PC-9 (cell line): ENCODE measurements at regions of chr2 and their contacts with region 1.

Region 1: DNA sequence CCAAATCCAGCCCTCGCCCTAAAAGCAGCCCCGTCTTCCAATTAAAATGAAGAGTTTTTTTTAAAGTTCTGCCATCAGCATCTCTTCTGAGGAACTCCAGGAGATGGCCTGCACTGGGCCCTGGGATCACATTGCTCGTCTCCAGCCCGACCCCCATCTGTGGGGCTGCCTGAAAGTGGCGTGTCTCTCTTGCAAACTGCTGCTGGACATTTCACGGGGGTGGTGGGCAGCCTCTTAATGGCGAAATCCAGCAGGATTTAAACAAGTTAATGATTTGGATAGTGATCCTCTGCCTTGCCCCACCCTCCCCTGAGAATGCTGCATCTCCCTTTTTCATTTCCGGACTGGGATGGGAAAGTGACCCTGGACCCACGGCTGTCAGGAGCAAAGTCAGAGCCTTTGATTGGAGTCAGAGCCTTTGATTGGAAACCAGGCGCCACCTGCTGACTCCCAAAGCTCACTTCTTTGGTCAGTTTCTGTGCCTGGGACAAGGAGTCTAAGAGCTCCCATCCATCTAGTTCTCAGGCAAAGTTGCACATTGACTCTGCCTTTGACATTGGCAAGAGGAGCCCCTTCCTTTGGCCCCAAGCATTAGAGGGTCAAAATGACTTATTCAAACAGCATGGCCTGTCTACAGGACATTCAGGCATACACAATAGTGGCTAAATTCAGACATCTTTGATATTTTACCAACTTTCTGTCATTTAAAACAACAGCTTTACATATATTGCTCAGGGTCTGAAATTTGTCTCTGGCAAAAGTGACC is 155.2 kb downstream of the SH3BP4 start:
- DNase-seq: peak; percentile 72 to 78
- H3K4me3 ChIP-seq: no peak overlapping the region
- H3K27ac ChIP-seq: no peak overlapping the region
- H3K4me1 ChIP-seq: peaks cover 9% of the 10 kb centered on the region; the same call in 1 of the 2 replicates
- H3K27me3 ChIP-seq: no peaks in the 10 kb centered on the region
- CTCF ChIP-seq: peak; percentile 91

Region 2: GRCh38 chr2:233854241-233854981 is 1252.6 kb before region 1 on chr2 and contains the start of gene HJURP:
- CTCF ChIA-PET with region 1: no interaction called
- POLR2A ChIA-PET with region 1: no interaction called
- intact Hi-C with region 1: loop called (anchors 5 kb)
- DNase-seq: peak; percentile 95 to 98
- H3K4me3 ChIP-seq: peak within 1 kb of the TSS; percentile 100
- H3K27ac ChIP-seq: peak within 1 kb of the TSS; percentile 21; the same call in 1 of the 2 replicates
- H3K4me1 ChIP-seq: peaks cover 32% of the 10 kb centered on the region
- H3K27me3 ChIP-seq: no peaks in the 10 kb centered on the region
- CTCF ChIP-seq: no peak
- total RNA-seq, gene HJURP: 109 TPM in 2 replicates

Region 3: GRCh38 chr2:234550511-234551107 is 556.4 kb before region 1 on chr2:
- CTCF ChIA-PET with region 1: interaction called, 3 read pairs
- POLR2A ChIA-PET with region 1: no interaction called
- intact Hi-C with region 1: loop called (anchors 1 kb)
- DNase-seq: peak; percentile 74 to 85
- H3K4me3 ChIP-seq: no peak overlapping the region
- H3K27ac ChIP-seq: no peak overlapping the region
- H3K4me1 ChIP-seq: peaks cover 11% of the 10 kb centered on the region
- H3K27me3 ChIP-seq: no peaks in the 10 kb centered on the region
- CTCF ChIP-seq: peak; percentile 99

Region 4: DNA sequence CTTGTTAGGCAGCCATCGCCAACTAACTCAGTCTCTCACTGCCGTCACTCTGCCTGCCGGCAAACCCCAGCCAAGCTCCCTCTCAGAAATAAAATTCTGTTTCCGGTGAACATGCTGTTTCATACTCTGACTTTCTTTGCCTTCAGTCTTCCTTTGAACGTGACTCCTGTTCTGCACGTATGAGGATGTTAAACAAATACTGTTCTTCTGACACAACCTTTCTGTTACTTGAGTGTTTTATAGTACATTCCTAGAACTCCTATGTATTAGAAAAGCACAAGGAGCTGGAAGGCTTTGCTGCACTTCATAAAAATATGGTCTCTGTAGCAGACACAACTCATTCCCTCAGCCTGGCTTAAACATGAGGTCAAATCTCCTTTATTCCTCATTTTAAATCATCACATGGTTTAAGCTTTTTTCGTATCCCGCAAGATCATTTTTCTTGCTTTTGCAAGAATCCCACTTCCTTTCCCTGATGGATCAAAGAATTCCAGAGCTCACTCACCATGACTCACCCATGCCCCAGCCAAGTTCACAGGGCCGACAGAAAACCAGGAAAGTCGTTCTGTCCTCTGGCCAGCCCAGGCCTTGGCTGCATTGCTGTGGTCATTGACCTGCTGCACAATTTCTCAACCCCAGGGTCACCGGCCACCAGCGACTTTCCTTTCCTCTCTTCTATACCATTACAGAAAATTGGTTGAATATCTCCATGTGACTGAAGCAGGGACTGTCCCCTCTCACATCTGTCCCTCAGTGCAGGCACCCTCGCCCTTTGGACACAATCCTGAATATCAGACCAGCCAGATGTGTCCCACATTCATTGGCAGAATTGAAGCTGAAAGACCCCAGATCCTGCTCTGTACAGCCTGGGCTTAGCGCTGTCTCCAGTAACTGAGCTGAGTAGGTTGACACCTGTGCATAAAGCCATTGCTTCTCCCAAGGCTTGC is 427.0 kb before region 1 on chr2:
- CTCF ChIA-PET with region 1: no interaction called
- POLR2A ChIA-PET with region 1: no interaction called
- intact Hi-C with region 1: loop called (anchors 2 kb)
- DNase-seq: peak; percentile 86 to 96
- H3K4me3 ChIP-seq: no peak overlapping the region
- H3K27ac ChIP-seq: peak overlapping the region; percentile 90
- H3K4me1 ChIP-seq: peaks cover 75% of the 10 kb centered on the region
- H3K27me3 ChIP-seq: no peaks in the 10 kb centered on the region
- CTCF ChIP-seq: no peak

Region 5: DNA sequence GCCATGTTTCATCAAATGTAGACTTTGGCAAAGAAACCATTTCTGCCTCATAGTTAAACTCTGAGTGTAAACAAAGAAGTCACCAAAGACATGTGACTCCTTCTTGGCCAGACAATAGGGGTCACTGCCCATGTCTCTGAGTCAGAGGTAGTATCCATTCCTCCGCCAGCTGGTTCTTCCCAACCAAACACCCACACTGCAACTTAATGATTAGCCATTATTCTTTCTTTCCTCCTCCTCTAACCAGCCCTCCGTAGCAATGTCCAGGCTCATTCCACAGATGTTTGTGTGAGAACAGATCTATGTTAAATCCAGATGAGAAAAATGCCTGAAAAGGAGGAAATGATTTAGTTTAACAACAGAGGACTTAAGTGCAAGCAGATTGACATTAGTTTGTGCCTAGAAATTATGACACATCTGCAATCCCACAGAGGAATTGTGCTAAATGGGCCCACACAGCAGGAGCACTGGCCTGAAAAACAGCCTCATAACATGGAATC is 283.1 kb before region 1 on chr2:
- CTCF ChIA-PET with region 1: no interaction called
- POLR2A ChIA-PET with region 1: no interaction called
- intact Hi-C with region 1: loop called (anchors 2 kb)
- DNase-seq: peak; percentile 77 to 92
- H3K4me3 ChIP-seq: no peak overlapping the region
- H3K27ac ChIP-seq: peak overlapping the region; percentile 46; the same call in 1 of the 2 replicates
- H3K4me1 ChIP-seq: peaks cover 54% of the 10 kb centered on the region
- H3K27me3 ChIP-seq: no peaks in the 10 kb centered on the region
- CTCF ChIP-seq: no peak

Region 6: GRCh38 chr2:234881413-234882241 is 225.4 kb before region 1 on chr2:
- CTCF ChIA-PET with region 1: interaction called, 6 read pairs
- POLR2A ChIA-PET with region 1: no interaction called
- intact Hi-C with region 1: loop called (anchors 2 kb)
- DNase-seq: peak; percentile 88 to 92
- H3K4me3 ChIP-seq: peak overlapping the region; percentile 41; the same call in 1 of the 2 replicates
- H3K27ac ChIP-seq: peak overlapping the region; percentile 82
- H3K4me1 ChIP-seq: peaks cover 47% of the 10 kb centered on the region
- H3K27me3 ChIP-seq: no peaks in the 10 kb centered on the region
- CTCF ChIP-seq: peak; percentile 97

Region 7: GRCh38 chr2:234996069-234996940 is 110.8 kb before region 1 on chr2:
- CTCF ChIA-PET with region 1: no interaction called
- POLR2A ChIA-PET with region 1: no interaction called
- intact Hi-C with region 1: loop called (anchors 5 kb)
- DNase-seq: peak in 1 of 2 experiments; percentile 89
- H3K4me3 ChIP-seq: no peak overlapping the region
- H3K27ac ChIP-seq: 0 out of 2 replicates have a peak overlapping the region, but pooled peaks have one; percentile 6
- H3K4me1 ChIP-seq: peaks cover 41% of the 10 kb centered on the region
- H3K27me3 ChIP-seq: no peaks in the 10 kb centered on the region
- CTCF ChIP-seq: no peak